ENCODE measurements at regions of chr12 and their contacts with region 1.

Region 1: DNA sequence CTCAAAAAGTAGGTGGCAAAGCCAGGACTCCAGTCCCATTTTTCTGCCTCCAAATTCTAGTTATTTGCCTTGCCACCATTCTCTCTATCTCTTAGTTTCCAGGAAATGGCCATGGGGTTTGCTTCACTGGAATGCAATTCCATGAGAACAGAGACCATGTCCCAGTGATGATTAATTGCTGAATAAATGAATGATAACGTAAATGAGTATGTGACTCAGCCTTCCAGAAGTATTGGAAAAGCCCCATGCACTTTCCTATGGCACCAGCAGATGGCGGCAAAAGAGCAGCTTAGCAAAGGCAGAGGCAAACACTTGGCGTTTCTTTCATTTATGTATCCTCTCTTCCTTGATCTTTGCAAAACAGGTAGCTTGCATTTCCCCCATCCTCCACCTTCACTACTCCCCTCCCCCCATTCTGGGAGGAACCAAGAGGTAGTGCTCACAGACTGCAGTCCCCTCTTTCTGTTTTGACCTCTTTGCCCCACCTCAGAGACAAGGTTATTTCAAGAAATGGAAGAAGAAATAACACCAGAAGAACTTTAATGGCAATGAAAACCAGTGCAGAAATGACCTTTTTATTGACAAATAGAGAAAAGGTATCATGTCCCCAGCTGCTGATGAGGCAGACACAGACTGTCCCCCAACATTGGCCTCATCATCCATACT is 21.3 kb downstream of the TBX3 start:
- DNase-seq: no peak
- ATAC-seq: peak; percentile 37

Region 2: GRCh38 chr12:115451780-115452736 is 789.4 kb after region 1 on chr12:
- intact Hi-C with region 1: loop called (anchors 10 kb)
- DNase-seq: peak; percentile 74
- ATAC-seq: peak; percentile 16

Region 3: GRCh38 chr12:115916910-115917668 is 1254.4 kb after region 1 on chr12:
- intact Hi-C with region 1: loop called (anchors 1 kb)
- DNase-seq: peak; percentile 80
- ATAC-seq: peak; percentile 53

Region 4: DNA sequence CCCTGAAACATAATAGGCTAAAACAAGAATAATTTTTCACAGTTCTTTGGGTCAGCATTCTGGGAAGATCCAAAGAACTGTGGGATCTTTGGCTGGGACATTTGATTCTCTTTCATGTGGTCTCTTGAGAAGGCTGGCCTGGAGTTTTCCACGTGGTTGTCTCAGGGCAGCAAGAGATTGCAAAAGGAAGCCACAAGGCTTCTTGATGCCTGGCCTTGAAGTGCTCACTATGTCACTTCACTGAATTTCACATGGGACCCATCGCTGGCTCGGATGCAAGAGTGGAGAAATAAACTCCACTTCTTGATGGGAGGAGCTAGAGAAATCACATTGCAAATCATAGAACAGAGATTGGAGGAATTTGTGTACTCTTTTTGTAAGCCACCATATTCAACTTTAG is 1271.4 kb after region 1 on chr12:
- intact Hi-C with region 1: loop called (anchors 5 kb)
- DNase-seq: no peak
- ATAC-seq: no peak

Measured in Right ventricle myocardium inferior (tissue), 1 donor.